SK-N-SH (cell line): ENCODE measurements at regions of chr3 and their contacts with region 1.

Region 1: DNA sequence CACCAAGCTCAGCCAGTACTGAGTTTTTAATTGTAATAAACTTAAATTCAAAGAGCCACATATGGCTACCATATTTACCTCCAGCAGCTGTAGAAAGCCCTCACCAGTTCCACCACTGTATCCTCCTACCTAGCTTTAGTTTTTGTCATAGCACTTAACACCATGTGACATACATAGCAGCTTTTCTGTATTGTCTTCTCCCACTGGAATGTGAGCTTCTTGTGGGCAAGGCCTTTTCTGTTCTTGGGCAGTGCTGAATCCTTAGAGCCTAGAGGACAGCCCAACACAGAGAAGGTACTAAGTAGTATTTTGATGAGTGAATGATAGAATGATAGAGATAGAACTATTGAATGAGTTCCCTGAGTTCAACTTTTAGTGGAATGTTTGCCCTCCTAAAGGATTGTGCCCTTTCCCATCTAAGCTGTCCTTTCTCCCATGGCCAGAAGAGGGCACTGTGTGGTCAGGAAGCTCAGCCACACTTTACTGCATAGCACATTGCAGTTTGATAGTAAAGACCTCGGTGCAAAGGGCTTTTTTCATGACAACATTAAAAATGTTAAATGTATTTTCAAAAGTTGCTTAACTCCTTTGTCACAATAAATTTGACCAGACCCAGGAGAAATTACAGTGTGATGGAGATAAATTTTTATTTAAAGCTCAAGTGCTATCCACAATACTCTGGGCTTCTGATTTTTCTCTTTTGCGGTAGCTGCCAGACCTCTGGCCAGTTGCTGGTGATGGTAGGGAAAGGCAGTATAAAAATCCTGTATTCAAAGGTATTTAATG is 115.8 kb downstream of the GHSR start:
- DNase-seq: peak; percentile 66
- H3K4me3 ChIP-seq: no peak overlapping the region; a peak in 1 of 4 replicates
- H3K27ac ChIP-seq: peak overlapping the region; percentile 3 to 56; a peak in 2 of 4 replicates
- H3K4me1 ChIP-seq: peaks cover 0 to 9% of the 10 kb centered on the region in 2 experiments; a peak in 1 of 4 replicates
- H3K27me3 ChIP-seq: no peaks in the 10 kb centered on the region
- CTCF ChIP-seq: peak; percentile 93
- EP300 ChIP-seq: no peak
- RAD21 ChIP-seq: peak; percentile 78

Region 2: DNA sequence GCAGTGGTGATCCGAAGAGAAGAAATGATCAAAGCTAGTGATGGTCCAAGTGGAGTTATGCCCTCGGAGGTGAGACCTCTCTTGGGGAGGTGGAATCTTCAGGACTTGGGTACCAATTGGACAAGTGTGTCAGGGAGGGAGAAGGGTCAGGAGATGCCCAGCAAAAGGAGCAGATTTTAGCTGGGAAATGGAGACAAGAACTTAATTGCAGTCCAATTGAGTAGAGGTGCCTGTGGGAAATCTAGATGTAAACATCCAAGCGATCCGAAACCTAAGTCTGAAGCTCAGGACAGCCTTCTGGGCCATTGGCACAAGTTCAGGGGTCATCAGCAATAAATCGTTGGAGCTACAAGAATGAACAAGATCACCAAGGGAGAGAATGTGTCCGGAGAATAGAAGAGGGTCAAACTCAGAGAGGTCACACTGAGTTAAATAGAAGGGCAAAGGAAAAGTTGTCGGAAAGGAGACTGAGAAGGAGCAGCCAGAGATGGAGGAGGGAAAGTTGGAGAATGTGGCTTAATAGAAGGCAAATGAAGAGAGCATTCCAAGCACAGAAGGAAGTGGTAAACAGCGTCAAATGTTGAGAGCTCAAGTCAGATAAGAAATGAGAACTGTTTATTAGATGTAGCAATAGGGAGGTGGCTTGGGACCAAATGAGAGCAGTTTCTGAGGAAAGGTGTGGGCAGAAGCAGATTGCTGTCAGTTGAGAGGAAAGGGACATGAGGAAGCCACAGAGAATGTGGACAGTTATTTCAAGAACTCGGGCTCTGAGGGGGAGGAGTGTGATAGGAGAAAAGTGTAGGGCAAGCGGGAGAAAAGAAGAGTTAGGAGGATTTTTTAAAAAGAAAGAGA is 357.2 kb before region 1 on chr3:
- CTCF ChIA-PET with region 1: no interaction called
- POLR2A ChIA-PET with region 1: no interaction called
- DNase-seq: no peak
- H3K4me3 ChIP-seq: no peak overlapping the region
- H3K27ac ChIP-seq: no peak overlapping the region
- H3K4me1 ChIP-seq: no peaks in the 10 kb centered on the region
- H3K27me3 ChIP-seq: no peaks in the 10 kb centered on the region
- CTCF ChIP-seq: no peak
- EP300 ChIP-seq: no peak
- RAD21 ChIP-seq: no peak

Region 3: DNA sequence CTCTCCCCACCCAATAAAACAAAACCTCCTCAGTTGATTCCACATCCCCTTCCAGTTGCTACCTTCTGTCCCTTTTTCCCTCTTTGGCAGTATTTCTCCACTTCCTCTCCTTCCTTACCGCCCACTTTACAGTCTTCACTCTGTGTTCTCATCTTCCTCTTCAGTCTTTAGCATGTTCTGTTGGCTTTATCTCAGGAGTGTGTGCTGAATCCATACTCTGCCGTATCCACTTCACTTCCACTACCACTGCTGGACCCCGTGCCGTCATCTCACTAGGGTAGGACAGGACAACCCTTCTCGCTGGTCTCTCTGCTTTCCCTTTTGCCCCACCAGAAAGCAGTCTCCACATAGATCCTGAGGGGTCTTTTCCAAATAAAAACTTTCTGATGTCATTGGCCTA is 218.7 kb before region 1 on chr3:
- CTCF ChIA-PET with region 1: no interaction called
- POLR2A ChIA-PET with region 1: no interaction called
- DNase-seq: no peak
- H3K4me3 ChIP-seq: no peak overlapping the region
- H3K27ac ChIP-seq: no peak overlapping the region
- H3K4me1 ChIP-seq: peaks cover 0 to 10% of the 10 kb centered on the region in 2 experiments; a peak in 2 of 4 replicates
- H3K27me3 ChIP-seq: no peaks in the 10 kb centered on the region
- CTCF ChIP-seq: no peak
- EP300 ChIP-seq: no peak
- RAD21 ChIP-seq: no peak

Region 4: DNA sequence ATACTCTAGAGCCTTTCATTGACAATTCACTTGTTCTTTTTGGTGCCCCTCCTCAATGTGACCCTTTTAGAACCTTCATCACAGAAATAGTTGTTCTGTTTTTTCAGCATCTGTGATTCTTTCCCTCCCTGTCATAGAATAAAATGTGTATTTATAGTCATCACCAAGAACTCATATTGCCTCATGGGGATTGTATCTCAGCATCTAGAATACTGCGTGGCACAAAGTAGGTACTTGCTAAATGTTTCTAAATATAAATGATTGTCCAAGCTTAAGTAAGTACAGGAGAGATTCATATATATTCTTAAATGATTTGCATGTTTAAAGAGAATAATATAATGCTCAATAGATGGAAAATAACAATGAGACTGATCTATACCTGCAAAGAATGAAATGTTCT is 103.0 kb before region 1 on chr3:
- CTCF ChIA-PET with region 1: no interaction called
- POLR2A ChIA-PET with region 1: no interaction called
- DNase-seq: no peak
- H3K4me3 ChIP-seq: no peak overlapping the region
- H3K27ac ChIP-seq: no peak overlapping the region
- H3K4me1 ChIP-seq: peaks cover 0 to 14% of the 10 kb centered on the region in 2 experiments; a peak in 2 of 4 replicates
- H3K27me3 ChIP-seq: no peaks in the 10 kb centered on the region
- CTCF ChIP-seq: no peak
- EP300 ChIP-seq: no peak
- RAD21 ChIP-seq: no peak

Region 5: GRCh38 chr3:172307141-172307560 is 25.3 kb before region 1 on chr3:
- CTCF ChIA-PET with region 1: interaction called, 12 read pairs
- POLR2A ChIA-PET with region 1: no interaction called
- DNase-seq: peak; percentile 41
- H3K4me3 ChIP-seq: no peak overlapping the region
- H3K27ac ChIP-seq: peak overlapping the region; percentile 47 to 67; a peak in 3 of 4 replicates
- H3K4me1 ChIP-seq: peaks cover 11 to 14% of the 10 kb centered on the region in 2 experiments
- H3K27me3 ChIP-seq: no peaks in the 10 kb centered on the region
- CTCF ChIP-seq: no peak
- EP300 ChIP-seq: no peak
- RAD21 ChIP-seq: no peak

Region 6: GRCh38 chr3:172317984-172318383 is 14.5 kb before region 1 on chr3:
- CTCF ChIA-PET with region 1: interaction called, 22 read pairs
- POLR2A ChIA-PET with region 1: interaction called, 3 read pairs
- DNase-seq: peak; percentile 53
- H3K4me3 ChIP-seq: no peak overlapping the region
- H3K27ac ChIP-seq: peak overlapping the region; percentile 81 to 94
- H3K4me1 ChIP-seq: peaks cover 24 to 39% of the 10 kb centered on the region in 2 experiments
- H3K27me3 ChIP-seq: no peaks in the 10 kb centered on the region
- CTCF ChIP-seq: no peak
- EP300 ChIP-seq: peak; percentile 62 to 63; a peak in 2 of 4 replicates
- RAD21 ChIP-seq: no peak

Region 7: DNA sequence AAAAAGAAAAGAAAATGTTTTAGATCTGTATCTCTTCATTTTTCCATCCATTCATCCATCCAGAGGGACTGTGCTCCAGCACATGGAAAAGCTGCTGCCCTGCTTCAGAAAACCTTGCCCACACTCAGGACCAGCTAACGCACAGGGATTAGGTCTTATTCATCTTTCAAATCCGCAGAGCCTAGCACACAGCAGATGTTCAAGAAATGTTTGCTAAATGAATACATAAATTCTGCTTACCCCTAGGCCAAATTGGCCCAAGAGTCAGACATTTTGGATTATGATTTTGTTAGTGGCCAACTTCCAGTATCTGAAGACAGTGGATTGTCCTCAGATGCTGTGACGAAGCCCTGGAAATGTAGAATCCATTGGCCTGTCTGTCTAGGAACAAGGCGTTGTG is 44.4 kb after region 1 on chr3:
- CTCF ChIA-PET with region 1: no interaction called
- POLR2A ChIA-PET with region 1: no interaction called
- DNase-seq: no peak
- H3K4me3 ChIP-seq: no peak overlapping the region
- H3K27ac ChIP-seq: no peak overlapping the region
- H3K4me1 ChIP-seq: peaks cover 0 to 5% of the 10 kb centered on the region in 2 experiments; a peak in 1 of 4 replicates
- H3K27me3 ChIP-seq: no peaks in the 10 kb centered on the region
- CTCF ChIP-seq: no peak
- EP300 ChIP-seq: no peak
- RAD21 ChIP-seq: no peak

Region 8: GRCh38 chr3:172476347-172476746 is 143.9 kb after region 1 on chr3:
- CTCF ChIA-PET with region 1: interaction called, 25 read pairs
- POLR2A ChIA-PET with region 1: no interaction called
- DNase-seq: no peak
- H3K4me3 ChIP-seq: peak overlapping the region in 1 of 2 experiments; percentile 70; a peak in 3 of 4 replicates
- H3K27ac ChIP-seq: no peak overlapping the region
- H3K4me1 ChIP-seq: no peaks in the 10 kb centered on the region; a peak in 1 of 4 replicates
- H3K27me3 ChIP-seq: no peaks in the 10 kb centered on the region
- CTCF ChIP-seq: no peak
- EP300 ChIP-seq: no peak
- RAD21 ChIP-seq: no peak